Right cardiac atrium (tissue), 5 donors: ENCODE measurements at regions of chr1 and their contacts with region 1.

Region 1: GRCh38 chr1:15304701-15305467 is 57.9 kb downstream of the FHAD1 start:
- DNase-seq: peak; percentile 63 to 82 (median 75)
- ATAC-seq: peak in 1 of 2 donors; percentile 66
- H3K4me3 ChIP-seq: no peak overlapping the region
- H3K27ac ChIP-seq: no peak overlapping the region
- H3K4me1 ChIP-seq: no peaks in the 10 kb centered on the region
- H3K27me3 ChIP-seq: no peaks in the 10 kb centered on the region

Region 2: GRCh38 chr1:15128520-15129313 is 176.2 kb before region 1 on chr1:
- intact Hi-C with region 1: loop called in 3 of 4 experiments (anchors 2 to 10 kb)
- DNase-seq: peak; percentile 44 to 86 (median 80)
- ATAC-seq: peak; percentile 85 to 92
- H3K4me3 ChIP-seq: no peak overlapping the region
- H3K27ac ChIP-seq: no peak overlapping the region
- H3K4me1 ChIP-seq: no peaks in the 10 kb centered on the region
- H3K27me3 ChIP-seq: no peaks in the 10 kb centered on the region

Region 3: DNA sequence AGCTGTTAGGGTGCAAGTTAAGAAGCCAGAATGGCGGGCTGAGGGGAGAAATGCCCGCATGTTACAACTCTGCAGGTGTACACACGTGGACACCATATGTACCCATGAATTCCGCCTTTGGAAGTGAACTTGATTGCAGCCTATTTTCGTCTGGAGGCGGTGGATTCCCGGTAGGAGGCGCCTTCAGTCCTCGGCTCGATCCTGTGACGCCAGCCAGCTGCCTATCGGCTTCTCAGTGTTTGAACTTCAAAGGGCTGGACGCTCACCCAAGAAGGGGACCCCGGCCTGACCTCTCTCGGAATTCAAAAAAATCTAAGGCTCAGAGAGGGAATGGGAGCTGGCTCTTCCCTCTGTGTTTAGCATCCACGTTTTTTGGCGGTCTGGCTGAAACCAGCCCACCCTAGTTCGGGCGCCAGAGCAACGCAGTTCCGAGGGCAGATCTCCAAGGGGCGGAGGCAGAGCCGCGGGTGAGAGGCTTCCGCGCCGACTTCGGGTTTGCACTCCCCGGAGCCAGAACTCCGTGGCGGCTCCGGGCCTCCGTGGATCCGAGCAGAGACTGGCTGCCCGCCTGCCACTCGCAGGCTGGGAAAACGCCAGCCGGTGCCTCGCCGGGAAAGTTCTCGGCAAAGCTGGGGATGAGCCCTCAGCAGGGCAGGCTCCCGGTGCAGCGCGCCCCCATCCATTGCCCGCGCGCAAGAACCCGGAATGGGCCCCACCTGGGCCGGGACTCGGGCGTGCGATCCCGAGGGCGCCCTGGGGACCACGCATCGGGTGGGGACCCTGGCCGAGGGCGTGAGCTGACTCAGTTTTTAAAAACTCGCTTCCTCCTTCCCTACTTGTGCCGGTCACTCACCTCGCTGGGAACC is 152.3 kb before region 1 on chr1:
- intact Hi-C with region 1: loop called in 1 of 4 experiments (anchors 10 kb)
- DNase-seq: peak; percentile 85 to 91 (median 90)
- ATAC-seq: peak; percentile 71 to 75
- H3K4me3 ChIP-seq: peak overlapping the region; percentile 58
- H3K27ac ChIP-seq: peak overlapping the region; percentile 73
- H3K4me1 ChIP-seq: no peaks in the 10 kb centered on the region
- H3K27me3 ChIP-seq: no peaks in the 10 kb centered on the region

Region 4: GRCh38 chr1:15218287-15219279 is 86.3 kb before region 1 on chr1:
- intact Hi-C with region 1: no loop called
- DNase-seq: peak in 1 of 3 donors; percentile 30
- ATAC-seq: peak; percentile 51 to 83
- H3K4me3 ChIP-seq: no peak overlapping the region
- H3K27ac ChIP-seq: no peak overlapping the region
- H3K4me1 ChIP-seq: no peaks in the 10 kb centered on the region
- H3K27me3 ChIP-seq: no peaks in the 10 kb centered on the region

Region 5: DNA sequence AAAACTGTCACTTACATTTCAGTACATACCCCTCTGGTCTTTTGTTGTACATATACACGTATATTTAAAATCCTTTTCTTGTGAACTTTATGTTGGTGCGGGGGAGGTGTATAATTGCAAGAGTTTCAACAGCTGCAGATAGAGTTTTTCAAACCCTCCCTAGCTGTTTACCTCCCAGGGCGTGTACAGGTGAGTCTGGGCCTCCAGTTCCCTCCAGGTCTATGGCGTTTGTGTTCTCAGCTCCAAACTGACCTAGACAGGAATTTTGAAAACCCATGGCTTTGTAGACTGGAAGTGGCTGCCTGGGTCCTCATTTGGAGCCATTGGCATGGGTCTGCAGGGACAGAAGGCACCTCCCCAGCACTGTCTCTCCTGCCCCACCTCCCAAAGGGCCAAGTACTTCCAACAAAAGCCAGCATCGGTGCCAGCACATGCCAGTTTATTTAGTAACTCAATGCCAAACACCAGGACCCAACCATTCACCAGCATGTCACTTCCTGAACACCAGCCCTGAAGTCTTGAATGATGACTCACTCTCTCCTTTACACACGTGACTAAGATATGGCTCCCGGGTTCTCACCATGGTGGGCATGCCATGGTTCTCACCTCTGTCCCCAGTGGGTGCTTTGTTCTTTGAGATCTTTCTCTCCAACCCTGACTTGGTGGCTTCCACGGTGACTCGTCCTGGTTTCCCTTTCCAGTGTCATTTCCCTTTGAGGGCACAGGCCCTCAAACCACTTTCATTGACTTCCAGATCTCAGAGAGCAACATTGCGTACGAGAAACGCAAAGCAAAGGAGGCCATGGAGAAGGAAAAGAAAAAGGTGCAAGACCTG is 47.5 kb after region 1 on chr1:
- intact Hi-C with region 1: no loop called
- DNase-seq: no peak
- ATAC-seq: peak; percentile 12 to 25
- H3K4me3 ChIP-seq: no peak overlapping the region
- H3K27ac ChIP-seq: no peak overlapping the region
- H3K4me1 ChIP-seq: no peaks in the 10 kb centered on the region
- H3K27me3 ChIP-seq: no peaks in the 10 kb centered on the region